Heart right ventricle (tissue), 16 donors: ENCODE measurements at regions of chr10 and their contacts with region 1.

Region 1: DNA sequence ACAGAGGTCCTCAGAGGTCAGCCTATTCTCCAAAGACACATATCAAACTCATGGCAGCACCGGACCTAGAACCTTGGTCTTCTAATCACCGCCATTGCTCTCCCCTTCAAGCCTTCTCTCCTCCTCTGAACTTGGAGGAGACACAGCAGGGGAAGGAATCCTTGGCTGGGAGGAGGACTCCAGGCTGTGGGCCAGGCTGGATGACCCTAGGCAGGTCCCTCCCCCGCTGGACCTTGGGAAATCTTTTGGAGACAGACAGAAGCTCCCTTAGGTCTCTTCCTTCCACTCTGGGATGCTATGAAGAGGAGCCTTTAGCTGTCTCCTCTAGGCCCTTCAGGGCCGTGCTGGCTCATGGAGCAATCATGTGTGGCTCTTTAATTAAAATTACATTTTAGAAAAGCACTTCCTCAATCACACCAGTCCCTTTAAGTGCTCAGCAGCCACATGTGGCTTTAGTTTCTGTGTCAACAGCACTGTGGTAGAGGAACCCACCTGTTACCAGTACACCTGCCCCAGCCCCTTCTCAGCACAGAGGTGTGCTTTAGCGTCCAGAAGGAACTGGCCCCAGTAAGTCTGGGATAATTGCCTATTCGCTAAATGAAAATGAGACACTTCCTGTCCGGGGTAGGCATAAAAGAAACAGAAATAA is 238.2 kb downstream of the CELF2 start:
- DNase-seq: peak; percentile 36 to 39
- ATAC-seq: peak in 7 of 8 donors; percentile 24 to 69 (median 40)
- H3K4me3 ChIP-seq: no peak overlapping the region
- H3K27ac ChIP-seq: peak overlapping the region in 3 of 10 donors; percentile 6 to 57 (median 14)
- H3K4me1 ChIP-seq: peaks cover 0 to 65% (median 41%) of the 10 kb centered on the region in 9 donors
- H3K27me3 ChIP-seq: no peaks in the 10 kb centered on the region
- CTCF ChIP-seq: no peak

Region 2: DNA sequence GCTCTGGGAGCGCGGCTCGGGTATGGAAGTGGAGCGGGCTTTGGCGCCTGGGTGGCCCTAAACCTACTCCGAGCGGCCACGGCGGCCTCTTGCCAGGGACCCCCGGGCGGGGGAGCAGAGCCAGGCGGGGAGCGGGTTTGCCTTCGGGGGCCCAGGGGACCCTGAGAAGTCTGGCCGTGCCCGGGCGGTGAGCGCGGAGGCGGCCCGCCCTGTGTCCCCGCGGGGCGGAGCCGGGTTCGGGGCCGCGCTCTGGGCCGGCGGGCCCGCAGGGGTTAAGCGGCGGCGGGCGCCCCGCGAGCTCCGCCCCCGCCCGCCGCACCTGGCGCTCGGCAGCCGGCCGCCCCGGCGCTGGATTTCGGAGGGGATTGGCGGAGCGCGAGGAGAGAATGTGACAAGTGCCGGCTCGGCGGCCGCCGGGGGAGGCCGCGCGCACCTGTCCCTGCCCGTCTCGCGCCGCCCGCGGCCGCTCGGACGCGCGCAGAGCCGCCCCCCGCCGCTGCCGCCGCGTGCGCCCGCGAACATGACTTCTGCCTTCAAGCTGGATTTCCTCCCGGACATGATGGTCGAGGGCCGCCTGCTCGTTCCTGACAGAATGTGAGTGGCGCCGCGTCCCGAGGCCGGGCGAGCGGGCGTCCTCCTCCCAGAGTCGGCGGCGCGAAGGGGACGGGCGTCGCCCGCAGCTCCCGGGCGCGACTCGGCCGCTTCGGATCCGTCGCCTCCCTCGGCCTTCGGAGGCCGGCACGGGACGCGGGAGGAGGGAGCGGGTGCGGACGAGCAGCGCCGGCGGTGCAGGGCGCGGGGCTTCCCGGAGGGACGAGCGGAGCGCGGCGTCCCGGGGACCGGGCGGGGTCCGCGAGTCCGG is 238.1 kb before region 1 on chr10 and contains the start of gene CELF2:
- intact Hi-C with region 1: loop called in 2 of 10 experiments (anchors 5 to 10 kb)
- DNase-seq: peak; percentile 73 to 77
- ATAC-seq: peak; percentile 54 to 92 (median 70)
- H3K4me3 ChIP-seq: peak within 1 kb of the TSS; percentile 53 to 98 (median 72)
- H3K27ac ChIP-seq: peak within 1 kb of the TSS; percentile 87 to 97 (median 92)
- H3K4me1 ChIP-seq: peaks cover 4 to 85% (median 45%) of the 10 kb centered on the region in 9 donors
- H3K27me3 ChIP-seq: peaks cover 0 to 72% (median 0%) of the 10 kb centered on the region in 7 donors
- CTCF ChIP-seq: no peak
- total RNA-seq, gene CELF2: 61.9 to 90.9 (median 82.2) TPM

Region 3: DNA sequence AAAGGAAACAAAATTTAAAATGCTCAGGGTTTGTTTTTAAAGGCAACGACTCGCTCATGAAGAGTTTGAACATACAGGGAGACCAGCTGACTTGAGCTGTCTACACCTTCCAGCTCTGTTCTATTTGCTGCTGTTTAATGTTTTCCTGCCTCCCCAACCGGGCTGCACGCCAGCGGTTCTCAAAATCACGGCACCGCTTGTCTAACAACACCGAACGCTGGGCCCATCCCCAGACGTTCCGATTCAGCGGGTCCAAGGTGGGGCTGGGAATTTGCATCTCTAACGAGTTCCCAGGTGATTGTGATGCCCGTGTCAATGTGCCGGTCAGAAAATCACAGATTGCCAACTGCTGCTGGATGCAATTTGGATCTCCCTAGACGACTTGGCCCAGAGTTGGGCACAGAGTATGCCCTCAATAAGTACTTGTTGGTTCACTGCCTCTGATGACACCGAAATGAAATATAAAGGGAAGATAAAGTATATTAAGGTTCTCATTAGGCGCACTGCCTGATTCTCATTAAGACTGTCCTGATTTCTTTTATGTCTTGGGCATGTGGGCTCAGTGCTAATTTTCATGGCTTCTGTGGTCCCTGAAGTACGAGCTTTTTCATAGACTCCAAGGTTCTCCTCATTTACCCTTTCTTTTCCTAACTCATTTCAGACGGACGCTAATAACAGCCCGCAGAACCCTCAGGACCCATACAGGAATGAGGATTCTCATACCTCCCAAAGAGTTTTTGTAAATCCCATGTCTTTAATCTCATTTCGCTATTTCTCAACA is 209.7 kb before region 1 on chr10:
- intact Hi-C with region 1: loop called in 3 of 10 experiments (anchors 10 kb)
- DNase-seq: peak; percentile 70 to 82
- ATAC-seq: peak; percentile 32 to 82 (median 72)
- H3K4me3 ChIP-seq: peak overlapping the region in 7 of 10 donors; percentile 1 to 28 (median 16)
- H3K27ac ChIP-seq: peak overlapping the region; percentile 61 to 86 (median 71)
- H3K4me1 ChIP-seq: peaks cover 25 to 89% (median 75%) of the 10 kb centered on the region in 9 donors
- H3K27me3 ChIP-seq: no peaks in the 10 kb centered on the region
- CTCF ChIP-seq: no peak

Region 4: GRCh38 chr10:11113156-11113555 is 142.8 kb before region 1 on chr10:
- intact Hi-C with region 1: loop called in 1 of 10 experiments (anchors 10 kb)
- DNase-seq: no peak
- ATAC-seq: no peak
- H3K4me3 ChIP-seq: no peak overlapping the region
- H3K27ac ChIP-seq: peak overlapping the region in 4 of 10 donors; percentile 33 to 73 (median 68)
- H3K4me1 ChIP-seq: peaks cover 0 to 69% (median 45%) of the 10 kb centered on the region in 9 donors
- H3K27me3 ChIP-seq: no peaks in the 10 kb centered on the region
- CTCF ChIP-seq: peak in 8 of 9 donors; percentile 8 to 49 (median 34)

Region 5: GRCh38 chr10:11197266-11197712 is 58.6 kb before region 1 on chr10:
- intact Hi-C with region 1: loop called in 1 of 10 experiments (anchors 5 kb)
- DNase-seq: peak; percentile 35 to 42
- ATAC-seq: peak; percentile 49 to 93 (median 79)
- H3K4me3 ChIP-seq: no peak overlapping the region
- H3K27ac ChIP-seq: peak overlapping the region in 7 of 10 donors; percentile 22 to 54 (median 45)
- H3K4me1 ChIP-seq: peaks cover 0 to 81% (median 61%) of the 10 kb centered on the region in 9 donors
- H3K27me3 ChIP-seq: no peaks in the 10 kb centered on the region
- CTCF ChIP-seq: no peak

Region 6: DNA sequence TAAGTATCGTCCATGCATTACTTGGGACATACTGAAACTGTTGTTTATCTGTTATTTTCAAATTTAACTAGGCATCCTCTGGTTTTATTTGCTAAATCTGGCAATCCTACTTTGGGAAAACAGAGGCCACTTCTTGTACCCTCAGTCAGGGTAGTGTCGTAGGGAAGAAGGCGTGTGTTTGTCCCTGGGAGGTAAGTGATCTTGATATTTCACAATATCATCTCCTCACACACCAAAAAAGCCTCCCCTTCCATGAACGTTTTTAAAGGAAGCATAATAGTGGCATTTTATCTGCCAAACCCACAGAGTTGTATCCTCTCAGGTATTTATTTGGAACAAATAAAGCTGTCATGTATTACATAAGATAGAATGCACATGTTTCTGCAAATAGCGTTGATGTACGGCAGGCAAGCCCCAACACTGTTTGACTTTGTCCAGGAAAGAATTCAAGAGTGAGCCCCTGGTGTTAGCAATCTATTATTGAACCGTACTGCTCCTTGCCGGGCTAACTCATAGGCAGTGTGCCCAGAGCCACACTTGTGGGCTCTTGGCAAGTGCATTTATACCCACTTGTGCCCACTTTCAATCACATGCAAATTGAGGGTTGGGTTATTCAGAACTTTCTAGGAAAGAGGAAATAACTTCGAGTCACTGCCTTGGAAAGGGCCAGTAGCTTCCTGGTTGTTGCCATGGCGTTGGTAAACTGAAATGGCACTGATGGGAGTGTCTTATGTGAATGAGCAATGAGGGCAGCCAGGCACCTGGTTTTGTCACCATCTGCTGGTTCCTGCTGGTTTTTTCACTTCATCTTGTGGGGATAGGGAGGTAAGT is 89.5 kb after region 1 on chr10:
- intact Hi-C with region 1: no loop called
- DNase-seq: no peak
- ATAC-seq: peak in 6 of 8 donors; percentile 11 to 70 (median 48)
- H3K4me3 ChIP-seq: no peak overlapping the region
- H3K27ac ChIP-seq: no peak overlapping the region
- H3K4me1 ChIP-seq: peaks cover 0 to 11% (median 6%) of the 10 kb centered on the region in 9 donors
- H3K27me3 ChIP-seq: no peaks in the 10 kb centered on the region
- CTCF ChIP-seq: peak in 2 of 9 donors; percentile 20 to 33

Region 7: DNA sequence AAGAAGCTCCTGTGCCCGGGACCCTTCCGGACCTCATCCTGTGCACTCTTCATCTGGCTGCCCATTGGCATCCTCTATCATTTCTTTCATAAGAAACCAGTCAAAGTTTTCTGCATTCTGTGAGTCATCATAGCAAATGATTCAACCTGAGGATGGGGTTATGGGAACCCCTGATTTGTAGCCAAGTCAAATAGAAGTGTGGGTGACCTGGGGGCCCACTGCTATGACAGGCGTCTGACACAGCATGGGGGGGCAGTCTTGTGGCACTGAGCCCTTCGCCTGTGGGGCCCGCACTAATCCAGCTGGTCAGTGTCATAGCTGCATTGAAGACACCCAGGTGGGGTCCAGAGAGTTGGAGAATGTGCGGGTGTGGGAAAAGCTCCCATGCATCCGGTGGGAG is 125.1 kb after region 1 on chr10:
- intact Hi-C with region 1: no loop called
- DNase-seq: no peak
- ATAC-seq: no peak
- H3K4me3 ChIP-seq: no peak overlapping the region
- H3K27ac ChIP-seq: no peak overlapping the region
- H3K4me1 ChIP-seq: peaks cover 0 to 4% (median 0%) of the 10 kb centered on the region in 9 donors
- H3K27me3 ChIP-seq: no peaks in the 10 kb centered on the region
- CTCF ChIP-seq: no peak